Activated CD4-positive, alpha-beta T cell treated with anti-CD3 and anti-CD28 coated beads for 36 hours (primary cell): ENCODE measurements at regions of chr9 and their contacts with region 1.

Region 1: DNA sequence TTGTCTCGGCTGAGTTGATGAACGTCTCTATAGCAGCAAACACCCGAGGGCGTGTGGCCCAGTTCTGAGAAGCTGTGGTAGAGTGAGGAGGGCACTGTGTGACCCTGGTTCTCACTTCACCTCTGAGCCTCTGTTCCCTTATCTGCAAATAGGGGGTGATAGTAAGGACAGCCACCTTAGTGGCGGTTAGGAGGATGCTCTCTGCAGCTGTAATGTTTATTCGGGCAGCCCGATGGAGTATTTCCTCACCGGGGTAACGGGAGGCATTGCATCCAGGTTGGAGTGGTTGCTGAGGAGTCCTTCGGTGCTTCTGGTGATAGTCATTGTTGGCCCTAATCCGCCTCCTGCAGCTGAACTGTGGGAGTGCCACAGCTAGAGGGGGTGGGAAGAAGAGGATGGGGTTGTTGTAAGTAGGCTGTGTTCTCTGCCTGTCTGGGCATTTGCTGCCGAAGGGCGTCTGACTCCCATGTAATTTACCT is 13.9 kb downstream of the PRRC2B start:
- DNase-seq: peak; percentile 63
- ATAC-seq: peak; percentile 47
- H3K4me3 Mint-ChIP-seq: peak overlapping the region; percentile 56
- H3K27ac Mint-ChIP-seq: peak overlapping the region; percentile 78
- H3K4me1 Mint-ChIP-seq: peaks cover 93% of the 10 kb centered on the region
- H3K27me3 Mint-ChIP-seq: no peaks in the 10 kb centered on the region

Region 2: DNA sequence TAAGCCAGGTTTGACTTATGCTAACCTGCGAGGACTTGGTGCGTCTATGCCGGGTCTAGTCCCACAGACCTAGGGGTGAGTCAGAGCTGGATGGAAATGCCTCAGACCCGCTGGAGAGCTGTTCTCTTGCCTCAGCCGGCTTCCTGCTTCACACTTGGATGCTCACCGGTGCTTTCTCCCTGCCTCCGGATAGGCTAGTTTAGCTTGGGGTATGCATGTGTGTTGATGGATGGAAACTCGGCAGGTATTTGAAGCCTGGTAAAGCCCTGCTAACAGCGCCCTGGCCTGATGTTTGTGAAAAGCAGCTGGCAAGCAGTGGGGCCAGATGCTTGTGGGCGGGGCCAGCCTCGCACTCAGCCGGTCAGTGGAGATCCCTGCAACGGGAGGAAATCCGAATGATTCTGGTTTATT is 15.4 kb after region 1 on chr9:
- CTCF ChIA-PET with region 1: interaction called, 19 read pairs
- POLR2A ChIA-PET with region 1: interaction called, 7 read pairs
- intact Hi-C with region 1: loop called in 1 of 2 experiments (anchors 2 kb)
- DNase-seq: peak; percentile 64
- ATAC-seq: peak; percentile 75
- H3K4me3 Mint-ChIP-seq: no peak overlapping the region
- H3K27ac Mint-ChIP-seq: peak overlapping the region; percentile 38
- H3K4me1 Mint-ChIP-seq: peaks cover 78% of the 10 kb centered on the region
- H3K27me3 Mint-ChIP-seq: no peaks in the 10 kb centered on the region

Region 3: GRCh38 chr9:131447148-131447547 is 39.4 kb after region 1 on chr9:
- CTCF ChIA-PET with region 1: interaction called, 3 read pairs
- POLR2A ChIA-PET with region 1: no interaction called
- intact Hi-C with region 1: loop called in 1 of 2 experiments (anchors 5 kb)
- DNase-seq: no peak
- ATAC-seq: no peak
- H3K4me3 Mint-ChIP-seq: no peak overlapping the region
- H3K27ac Mint-ChIP-seq: peak overlapping the region; percentile 42
- H3K4me1 Mint-ChIP-seq: peaks cover 20% of the 10 kb centered on the region
- H3K27me3 Mint-ChIP-seq: no peaks in the 10 kb centered on the region